Mammary epithelial cell (primary cell): ENCODE measurements at regions of chr1 and their contacts with region 1.

Region 1: GRCh38 chr1:17287130-17287776 is 20.7 kb upstream of the PADI4 start:
- DNase-seq: peak; percentile 96
- H3K4me3 ChIP-seq: no peak overlapping the region
- H3K27ac ChIP-seq: no peak overlapping the region
- H3K4me1 ChIP-seq: peaks cover 47% of the 10 kb centered on the region
- H3K27me3 ChIP-seq: no peaks in the 10 kb centered on the region
- CTCF ChIP-seq: no peak

Region 2: GRCh38 chr1:17250601-17251000 is 36.7 kb before region 1 on chr1:
- CTCF ChIA-PET with region 1: no interaction called
- dilution Hi-C with region 1: no loop called
- in situ Hi-C with region 1: no loop called
- intact Hi-C with region 1: loop called (anchors 5 kb)
- DNase-seq: peak; percentile 89
- H3K4me3 ChIP-seq: no peak overlapping the region
- H3K27ac ChIP-seq: peak overlapping the region; percentile 26
- H3K4me1 ChIP-seq: peaks cover 42% of the 10 kb centered on the region
- H3K27me3 ChIP-seq: no peaks in the 10 kb centered on the region
- CTCF ChIP-seq: no peak

Region 3: GRCh38 chr1:17265162-17265561 is 22.1 kb before region 1 on chr1:
- CTCF ChIA-PET with region 1: no interaction called
- dilution Hi-C with region 1: no loop called
- in situ Hi-C with region 1: no loop called
- intact Hi-C with region 1: loop called (anchors 1 kb)
- DNase-seq: peak; percentile 69
- H3K4me3 ChIP-seq: no peak overlapping the region
- H3K27ac ChIP-seq: peak overlapping the region; percentile 34
- H3K4me1 ChIP-seq: peaks cover 33% of the 10 kb centered on the region
- H3K27me3 ChIP-seq: no peaks in the 10 kb centered on the region
- CTCF ChIP-seq: peak; percentile 3 to 37

Region 4: GRCh38 chr1:17274186-17275170 is 12.8 kb before region 1 on chr1:
- CTCF ChIA-PET with region 1: no interaction called
- dilution Hi-C with region 1: no loop called
- in situ Hi-C with region 1: no loop called
- intact Hi-C with region 1: loop called (anchors 1 kb)
- DNase-seq: peak; percentile 39
- H3K4me3 ChIP-seq: no peak overlapping the region
- H3K27ac ChIP-seq: no peak overlapping the region
- H3K4me1 ChIP-seq: peaks cover 10% of the 10 kb centered on the region
- H3K27me3 ChIP-seq: no peaks in the 10 kb centered on the region
- CTCF ChIP-seq: peak; percentile 63 to 77

Region 5: GRCh38 chr1:17309435-17310337 is 22.4 kb after region 1 on chr1:
- CTCF ChIA-PET with region 1: interaction called, 4 read pairs
- dilution Hi-C with region 1: no loop called
- in situ Hi-C with region 1: no loop called
- intact Hi-C with region 1: loop called (anchors 1 kb)
- DNase-seq: no peak
- H3K4me3 ChIP-seq: no peak overlapping the region
- H3K27ac ChIP-seq: no peak overlapping the region
- H3K4me1 ChIP-seq: peaks cover 16% of the 10 kb centered on the region
- H3K27me3 ChIP-seq: no peaks in the 10 kb centered on the region
- CTCF ChIP-seq: no peak

Region 6: DNA sequence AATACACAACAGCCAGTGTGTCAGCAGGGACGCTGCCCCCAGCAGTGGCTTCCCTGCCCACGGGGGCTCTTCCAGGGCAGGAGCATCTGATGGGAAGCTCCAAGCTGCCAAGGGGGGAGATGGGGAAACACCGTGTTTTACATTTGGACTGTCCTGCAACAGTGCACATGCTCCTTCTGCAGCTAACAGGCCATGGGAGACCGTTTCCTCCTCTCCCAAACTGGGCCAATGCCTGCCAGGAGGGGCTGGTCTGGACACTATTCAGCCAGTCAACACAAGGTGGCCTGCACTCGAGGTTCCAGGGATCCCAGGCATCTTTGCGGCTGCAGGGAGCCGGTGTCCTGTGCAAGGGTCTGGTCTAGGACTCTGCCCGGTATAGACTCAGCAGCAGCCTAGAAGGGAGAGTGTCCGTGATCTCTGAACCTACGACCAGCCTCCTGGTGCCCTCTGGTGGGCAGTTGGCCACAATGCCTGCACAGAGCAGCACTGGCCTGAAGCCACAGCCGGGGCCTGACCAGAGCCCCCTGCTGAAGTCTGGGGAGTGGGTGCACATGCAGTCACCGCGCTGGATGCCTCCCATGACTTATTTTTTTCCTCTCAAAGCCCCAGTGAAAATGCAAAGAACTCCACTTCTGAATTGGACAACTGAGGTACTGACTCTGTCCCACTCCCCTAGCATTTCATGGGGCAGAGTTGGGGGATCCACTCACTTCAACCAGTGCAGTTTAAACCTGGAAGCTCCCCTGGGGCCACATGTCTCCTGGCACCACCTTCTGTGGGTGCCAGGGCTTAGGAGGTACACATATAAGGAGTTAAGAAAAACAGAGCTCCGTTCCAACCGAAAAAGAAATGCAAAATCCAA is 118.9 kb after region 1 on chr1:
- CTCF ChIA-PET with region 1: interaction called, 9 read pairs
- dilution Hi-C with region 1: no loop called
- in situ Hi-C with region 1: no loop called
- intact Hi-C with region 1: loop called (anchors 5 kb)
- DNase-seq: peak; percentile 32
- H3K4me3 ChIP-seq: no peak overlapping the region
- H3K27ac ChIP-seq: no peak overlapping the region
- H3K4me1 ChIP-seq: peaks cover 19% of the 10 kb centered on the region
- H3K27me3 ChIP-seq: no peaks in the 10 kb centered on the region
- CTCF ChIP-seq: peak; percentile 79 to 83

Region 7: GRCh38 chr1:17475729-17476128 is 188.5 kb after region 1 on chr1:
- CTCF ChIA-PET with region 1: no interaction called
- dilution Hi-C with region 1: no loop called
- in situ Hi-C with region 1: no loop called
- intact Hi-C with region 1: no loop called
- DNase-seq: peak; percentile 92
- H3K4me3 ChIP-seq: no peak overlapping the region
- H3K27ac ChIP-seq: no peak overlapping the region
- H3K4me1 ChIP-seq: peaks cover 8% of the 10 kb centered on the region
- H3K27me3 ChIP-seq: no peaks in the 10 kb centered on the region
- CTCF ChIP-seq: no peak